ENCODE measurements at regions of chr5 and their contacts with region 1.

Region 1: GRCh38 chr5:44774279-44774880 is 34.4 kb upstream of the MRPS30 start:
- DNase-seq: no peak
- H3K4me3 ChIP-seq: no peak overlapping the region
- H3K27ac ChIP-seq: no peak overlapping the region
- H3K4me1 ChIP-seq: no peaks in the 10 kb centered on the region
- H3K27me3 ChIP-seq: no peaks in the 10 kb centered on the region
- CTCF ChIP-seq: peak; percentile 46 to 53 (median 52)
- EP300 ChIP-seq: no peak
- POLR2A ChIP-seq: no peak

Region 2: DNA sequence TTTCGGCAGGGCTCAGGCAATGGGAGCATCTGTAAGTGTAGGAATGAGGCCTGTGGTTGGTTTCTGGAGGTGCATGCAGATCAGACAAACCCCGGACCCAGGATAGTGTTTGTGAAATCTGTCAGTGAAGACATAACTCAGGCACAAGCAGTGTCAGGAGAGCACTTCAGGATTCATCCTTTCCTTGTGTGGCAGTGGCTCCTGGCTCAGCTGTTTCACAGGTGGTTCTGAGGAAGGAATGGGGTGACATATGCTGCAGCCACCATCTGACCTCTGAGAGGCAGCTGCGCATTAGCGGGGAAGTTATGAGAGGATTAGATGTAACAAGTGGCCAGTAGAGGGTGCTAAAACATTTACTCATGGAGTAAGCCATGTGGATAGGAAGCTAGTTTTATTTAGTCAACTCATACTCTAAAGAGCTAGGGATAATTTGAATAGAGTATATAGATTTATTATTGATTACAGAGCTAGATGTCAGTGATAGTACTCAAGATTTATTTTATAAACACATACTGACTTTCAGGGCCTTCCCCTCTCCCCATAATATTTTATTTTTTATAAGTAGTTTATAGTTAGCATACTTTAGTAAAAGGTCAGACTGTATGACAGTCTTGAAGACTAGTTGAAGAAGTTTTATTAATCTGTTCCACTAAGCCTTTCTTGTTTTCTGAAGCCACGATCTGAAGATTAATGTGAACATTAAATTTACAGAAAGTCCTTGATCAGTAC is 1143.0 kb before region 1 on chr5:
- intact Hi-C with region 1: loop called (anchors 10 kb)
- DNase-seq: no peak
- H3K4me3 ChIP-seq: no peak overlapping the region
- H3K27ac ChIP-seq: peak overlapping the region in 3 of 4 donors; percentile 16 to 40 (median 36)
- H3K4me1 ChIP-seq: peaks cover 26 to 37% (median 30%) of the 10 kb centered on the region in 4 donors
- H3K27me3 ChIP-seq: no peaks in the 10 kb centered on the region
- CTCF ChIP-seq: peak; percentile 55 to 74 (median 62)
- EP300 ChIP-seq: no peak
- POLR2A ChIP-seq: no peak

Region 3: DNA sequence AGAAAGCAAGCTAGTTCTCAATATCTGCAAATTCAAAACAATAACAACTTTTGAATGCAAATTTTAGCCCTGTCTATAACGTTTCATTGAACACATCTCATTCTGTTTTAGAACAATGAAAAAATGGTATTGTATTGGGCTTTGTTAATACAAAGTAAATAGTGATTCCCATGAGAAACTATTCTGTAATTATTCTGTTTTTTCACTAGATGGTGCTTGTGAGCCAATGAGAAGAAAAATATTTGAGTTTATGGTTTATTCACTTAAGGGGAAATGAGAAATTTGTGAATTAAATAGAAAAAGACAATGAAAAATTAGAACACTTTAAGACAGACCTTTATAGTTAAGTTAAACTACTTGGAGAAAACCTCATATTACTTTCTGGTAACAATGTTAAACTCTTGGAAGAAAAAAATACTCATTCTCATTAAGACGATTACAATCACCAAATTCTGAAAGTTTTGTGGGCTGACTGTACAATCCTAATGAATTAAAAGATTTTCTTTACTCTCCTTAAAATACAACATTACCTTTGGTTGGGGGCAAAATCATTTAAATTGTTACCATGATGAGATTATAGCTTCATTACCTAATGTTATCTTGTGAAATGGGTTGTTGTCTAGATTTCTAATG is 1044.4 kb before region 1 on chr5:
- intact Hi-C with region 1: loop called (anchors 5 kb)
- DNase-seq: no peak
- H3K4me3 ChIP-seq: no peak overlapping the region
- H3K27ac ChIP-seq: no peak overlapping the region
- H3K4me1 ChIP-seq: peaks cover 0 to 7% (median 0%) of the 10 kb centered on the region in 4 donors
- H3K27me3 ChIP-seq: no peaks in the 10 kb centered on the region
- CTCF ChIP-seq: peak; percentile 33 to 67 (median 52)
- EP300 ChIP-seq: no peak
- POLR2A ChIP-seq: no peak

Region 4: GRCh38 chr5:44536650-44537260 is 237.6 kb before region 1 on chr5:
- intact Hi-C with region 1: loop called (anchors 5 kb)
- DNase-seq: no peak
- H3K4me3 ChIP-seq: no peak overlapping the region
- H3K27ac ChIP-seq: no peak overlapping the region
- H3K4me1 ChIP-seq: peaks cover 0 to 9% (median 0%) of the 10 kb centered on the region in 4 donors
- H3K27me3 ChIP-seq: no peaks in the 10 kb centered on the region
- CTCF ChIP-seq: peak in 2 of 3 experiments; percentile 53 to 63
- EP300 ChIP-seq: no peak
- POLR2A ChIP-seq: no peak

Measured in esophagus muscularis mucosa (tissue), 4 donors.